Naive thymus-derived CD4-positive, alpha-beta T cell (primary cell): ENCODE measurements at regions of chr1 and their contacts with region 1.

Region 1: GRCh38 chr1:228405987-228406265 is 709 bp downstream of the TRIM11 start:
- DNase-seq: no peak
- ATAC-seq: no peak
- H3K4me3 ChIP-seq: peak overlapping the region; percentile 74
- H3K4me3 Mint-ChIP-seq: peak overlapping the region; percentile 80 to 99 (median 94)
- H3K27ac ChIP-seq: peak overlapping the region; percentile 86
- H3K27ac Mint-ChIP-seq: peak overlapping the region; percentile 36 to 92 (median 80)
- H3K4me1 ChIP-seq: peaks cover 36 to 41% of the 10 kb centered on the region in 2 donors
- H3K4me1 Mint-ChIP-seq: peaks cover 46 to 77% (median 56%) of the 10 kb centered on the region in 7 donors
- H3K27me3 ChIP-seq: no peaks in the 10 kb centered on the region
- H3K27me3 Mint-ChIP-seq: no peaks in the 10 kb centered on the region

Region 2: GRCh38 chr1:228082135-228082891 is 323.6 kb before region 1 on chr1 and contains the start of gene ARF1:
- CTCF ChIA-PET with region 1: no interaction called
- POLR2A ChIA-PET with region 1: no interaction called
- intact Hi-C with region 1: loop called (anchors 1 kb)
- DNase-seq: peak; percentile 89 to 99 (median 96)
- ATAC-seq: peak; percentile 97
- H3K4me3 ChIP-seq: peak within 1 kb of the TSS; percentile 88
- H3K4me3 Mint-ChIP-seq: peak within 1 kb of the TSS; percentile 89 to 97 (median 95)
- H3K27ac ChIP-seq: peak within 1 kb of the TSS; percentile 97
- H3K27ac Mint-ChIP-seq: peak within 1 kb of the TSS; percentile 76 to 97 (median 95)
- H3K4me1 ChIP-seq: peaks cover 41 to 43% of the 10 kb centered on the region in 2 donors
- H3K4me1 Mint-ChIP-seq: peaks cover 36 to 66% (median 52%) of the 10 kb centered on the region in 7 donors
- H3K27me3 ChIP-seq: no peaks in the 10 kb centered on the region
- H3K27me3 Mint-ChIP-seq: no peaks in the 10 kb centered on the region
- total RNA-seq, gene ARF1: 198 to 390 (median 259) TPM

Region 3: DNA sequence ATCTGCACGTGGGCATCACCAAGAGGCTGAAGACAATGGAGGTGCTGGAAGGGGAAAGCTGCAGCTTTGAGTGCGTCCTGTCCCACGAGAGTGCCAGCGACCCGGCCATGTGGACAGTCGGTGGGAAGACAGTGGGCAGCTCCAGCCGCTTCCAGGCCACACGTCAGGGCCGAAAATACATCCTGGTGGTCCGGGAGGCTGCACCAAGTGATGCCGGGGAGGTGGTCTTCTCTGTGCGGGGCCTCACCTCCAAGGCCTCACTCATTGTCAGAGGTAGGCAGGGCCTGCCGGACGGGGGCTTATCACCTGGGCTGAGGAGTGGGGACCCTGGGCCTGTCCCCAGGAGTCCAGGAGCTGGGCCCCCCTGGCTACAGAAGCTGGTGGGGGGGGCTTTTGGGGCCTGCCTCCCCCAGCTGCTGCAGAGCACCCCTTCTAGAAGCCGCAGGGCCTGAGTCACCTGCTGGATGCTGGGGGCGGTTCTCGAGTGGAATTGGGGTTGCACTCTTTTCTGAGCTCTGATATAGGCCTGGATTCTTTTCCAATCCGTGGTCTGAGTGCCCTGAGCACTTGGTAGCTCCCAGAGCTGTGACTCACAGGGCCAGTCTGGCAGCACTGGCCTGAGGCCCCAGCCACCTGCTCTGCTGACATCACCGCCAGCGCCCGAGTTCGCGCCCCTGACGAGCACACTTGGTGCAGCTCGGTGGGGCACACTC is 123.8 kb before region 1 on chr1:
- CTCF ChIA-PET with region 1: no interaction called
- POLR2A ChIA-PET with region 1: no interaction called
- intact Hi-C with region 1: no loop called
- DNase-seq: peak in 1 of 9 donors; percentile 4
- ATAC-seq: no peak
- H3K4me3 ChIP-seq: no peak overlapping the region
- H3K4me3 Mint-ChIP-seq: no peak overlapping the region
- H3K27ac ChIP-seq: no peak overlapping the region
- H3K27ac Mint-ChIP-seq: no peak overlapping the region
- H3K4me1 ChIP-seq: no peaks in the 10 kb centered on the region
- H3K4me1 Mint-ChIP-seq: peaks cover 0 to 3% (median 0%) of the 10 kb centered on the region in 7 donors
- H3K27me3 ChIP-seq: no peaks in the 10 kb centered on the region
- H3K27me3 Mint-ChIP-seq: no peaks in the 10 kb centered on the region

Region 4: DNA sequence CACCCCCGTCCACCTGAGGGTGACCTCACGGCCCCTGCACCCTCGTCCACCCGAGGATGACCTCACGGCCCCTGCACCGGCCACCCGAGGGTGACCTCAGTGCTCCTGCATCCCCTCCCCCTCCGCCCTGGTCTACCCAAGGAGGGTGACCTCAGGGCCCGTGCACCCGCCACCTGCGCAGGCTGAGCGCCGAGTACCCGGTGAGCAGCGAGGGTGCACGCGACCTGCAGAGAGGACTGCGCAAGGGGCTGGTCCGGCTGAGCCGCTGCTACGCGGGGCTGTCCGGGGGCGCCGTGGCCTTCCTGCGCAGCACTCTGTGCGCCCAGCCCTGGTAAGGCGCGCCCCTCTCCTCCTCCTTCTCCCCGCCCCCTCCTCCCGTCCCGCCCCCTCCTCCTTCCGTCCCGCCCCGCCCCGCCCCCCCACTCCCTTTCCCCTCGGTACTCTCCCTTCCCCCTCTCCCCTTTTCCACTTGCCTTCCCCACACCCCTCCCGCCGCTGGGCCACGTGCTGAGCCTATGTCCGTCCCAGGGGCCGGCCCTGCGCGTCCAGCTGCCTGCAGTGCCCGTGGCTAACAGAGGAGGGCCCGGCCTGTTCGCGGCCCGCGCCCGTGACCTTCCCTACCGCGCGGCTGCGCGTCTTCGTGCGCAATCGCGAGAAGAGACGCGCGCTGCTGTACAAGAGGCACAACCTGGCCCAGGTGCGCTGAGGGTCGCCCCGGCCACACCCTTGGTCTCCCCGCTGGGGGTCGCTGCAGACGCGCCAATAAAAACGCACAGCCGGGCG is 27.6 kb before region 1 on chr1:
- CTCF ChIA-PET with region 1: no interaction called
- POLR2A ChIA-PET with region 1: no interaction called
- intact Hi-C with region 1: loop called in 1 of 2 experiments (anchors 1 kb)
- DNase-seq: peak; percentile 37 to 75 (median 61)
- ATAC-seq: peak; percentile 58
- H3K4me3 ChIP-seq: peak overlapping the region; percentile 37
- H3K4me3 Mint-ChIP-seq: peak overlapping the region; percentile 80 to 90 (median 84)
- H3K27ac ChIP-seq: no peak overlapping the region
- H3K27ac Mint-ChIP-seq: peak overlapping the region in 4 of 9 donors; percentile 28 to 72 (median 51)
- H3K4me1 ChIP-seq: no peaks in the 10 kb centered on the region
- H3K4me1 Mint-ChIP-seq: peaks cover 6 to 18% (median 8%) of the 10 kb centered on the region in 7 donors
- H3K27me3 ChIP-seq: peaks cover 0 to 4% of the 10 kb centered on the region in 2 donors
- H3K27me3 Mint-ChIP-seq: peaks cover 0 to 42% (median 9%) of the 10 kb centered on the region in 5 donors

Region 5: GRCh38 chr1:228464487-228464983 is 58.6 kb after region 1 on chr1:
- CTCF ChIA-PET with region 1: no interaction called
- POLR2A ChIA-PET with region 1: interaction called, 6 read pairs
- intact Hi-C with region 1: loop called (anchors 1 kb)
- DNase-seq: peak; percentile 56 to 93 (median 85)
- ATAC-seq: peak; percentile 98
- H3K4me3 ChIP-seq: peak overlapping the region; percentile 62
- H3K4me3 Mint-ChIP-seq: peak overlapping the region; percentile 73 to 93 (median 82)
- H3K27ac ChIP-seq: peak overlapping the region; percentile 50
- H3K27ac Mint-ChIP-seq: peak overlapping the region; percentile 13 to 92 (median 62)
- H3K4me1 ChIP-seq: peaks cover 17 to 18% of the 10 kb centered on the region in 2 donors
- H3K4me1 Mint-ChIP-seq: peaks cover 24 to 66% (median 40%) of the 10 kb centered on the region in 7 donors
- H3K27me3 ChIP-seq: no peaks in the 10 kb centered on the region
- H3K27me3 Mint-ChIP-seq: peaks cover 11 to 34% (median 24%) of the 10 kb centered on the region in 5 donors